ENCODE measurements at regions of chr12 and their contacts with region 1.

Region 1: GRCh38 chr12:17763366-17763765 is 326.6 kb downstream of the RERGL start:
- DNase-seq: no peak
- ATAC-seq: no peak
- H3K4me3 ChIP-seq: no peak overlapping the region
- H3K27ac ChIP-seq: no peak overlapping the region
- H3K4me1 ChIP-seq: no peaks in the 10 kb centered on the region
- H3K27me3 ChIP-seq: no peaks in the 10 kb centered on the region
- CTCF ChIP-seq: no peak
- POLR2A ChIP-seq: no peak

Region 2: DNA sequence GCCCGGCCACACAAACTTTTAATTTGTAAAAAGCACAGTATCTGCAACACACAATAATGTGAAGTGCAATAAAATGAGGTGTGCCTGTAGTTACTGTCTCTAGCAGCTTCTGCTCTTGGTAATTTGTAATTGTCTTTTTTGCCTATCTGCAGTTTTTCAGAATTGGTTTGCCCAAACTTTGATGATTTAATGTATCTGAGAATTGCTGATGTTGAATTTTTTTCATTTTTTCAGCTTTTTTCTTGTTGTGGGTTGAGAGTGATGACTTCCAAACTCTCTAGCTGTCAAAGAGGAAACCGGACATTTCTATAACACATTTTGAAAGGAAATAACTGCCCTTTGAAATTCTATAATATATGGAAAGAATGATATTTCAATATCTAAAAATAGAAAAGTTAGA is 89.7 kb after region 1 on chr12:
- intact Hi-C with region 1: loop called in 1 of 2 experiments (anchors 5 kb)
- DNase-seq: no peak
- ATAC-seq: no peak
- H3K4me3 ChIP-seq: no peak overlapping the region
- H3K27ac ChIP-seq: no peak overlapping the region
- H3K4me1 ChIP-seq: no peaks in the 10 kb centered on the region
- H3K27me3 ChIP-seq: no peaks in the 10 kb centered on the region
- CTCF ChIP-seq: no peak
- POLR2A ChIP-seq: no peak